GM12878 (cell line): ENCODE measurements at regions of chr13 and their contacts with region 1.

Region 1: GRCh38 chr13:89361909-89362308 is 1690.7 kb downstream of the SLITRK5 start:
- DNase-seq: no peak
- ATAC-seq: no peak
- H3K4me3 ChIP-seq: no peak overlapping the region
- H3K27ac ChIP-seq: no peak overlapping the region
- H3K4me1 ChIP-seq: no peaks in the 10 kb centered on the region
- H3K27me3 ChIP-seq: no peaks in the 10 kb centered on the region
- CTCF ChIP-seq: no peak; a peak in 1 of 6 replicates
- EP300 ChIP-seq: no peak
- POLR2A ChIP-seq: no peak
- RAD21 ChIP-seq: no peak

Region 2: DNA sequence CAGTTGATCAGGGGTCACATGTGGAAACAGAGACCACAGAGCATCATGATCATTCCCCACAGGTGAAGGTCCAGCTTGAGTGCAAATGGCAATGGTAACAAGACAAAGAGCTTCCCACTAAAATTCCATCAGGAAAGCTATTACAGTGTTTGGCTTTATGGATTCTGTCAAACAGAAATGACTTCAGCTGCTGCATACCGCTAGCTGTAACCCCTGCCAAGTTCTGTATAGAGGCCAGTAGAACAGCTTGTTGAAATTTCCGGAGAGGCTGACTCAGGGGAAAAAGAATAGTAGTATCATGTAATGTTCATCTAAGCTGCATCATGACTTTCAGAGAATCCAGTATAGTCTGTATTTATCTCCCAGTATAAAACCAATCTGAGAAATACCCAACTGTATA is 13.9 kb after region 1 on chr13:
- CTCF ChIA-PET with region 1: no interaction called
- POLR2A ChIA-PET with region 1: no interaction called
- RAD21 ChIA-PET with region 1: no interaction called
- SMC1A ChIA-PET with region 1: no interaction called
- in situ Hi-C with region 1: no loop called
- intact Hi-C with region 1: no loop called
- DNase-seq: no peak
- ATAC-seq: no peak
- H3K4me3 ChIP-seq: no peak overlapping the region
- H3K27ac ChIP-seq: no peak overlapping the region
- H3K4me1 ChIP-seq: no peaks in the 10 kb centered on the region
- H3K27me3 ChIP-seq: no peaks in the 10 kb centered on the region
- CTCF ChIP-seq: no peak
- EP300 ChIP-seq: no peak
- POLR2A ChIP-seq: no peak
- RAD21 ChIP-seq: no peak

Region 3: GRCh38 chr13:89393758-89394304 is 31.9 kb after region 1 on chr13:
- CTCF ChIA-PET with region 1: no interaction called
- POLR2A ChIA-PET with region 1: no interaction called
- RAD21 ChIA-PET with region 1: no interaction called
- SMC1A ChIA-PET with region 1: no interaction called
- in situ Hi-C with region 1: no loop called
- intact Hi-C with region 1: no loop called
- DNase-seq: no peak
- ATAC-seq: no peak
- H3K4me3 ChIP-seq: no peak overlapping the region
- H3K27ac ChIP-seq: no peak overlapping the region
- H3K4me1 ChIP-seq: no peaks in the 10 kb centered on the region
- H3K27me3 ChIP-seq: no peaks in the 10 kb centered on the region
- CTCF ChIP-seq: no peak
- EP300 ChIP-seq: no peak
- POLR2A ChIP-seq: no peak
- RAD21 ChIP-seq: no peak

Region 4: DNA sequence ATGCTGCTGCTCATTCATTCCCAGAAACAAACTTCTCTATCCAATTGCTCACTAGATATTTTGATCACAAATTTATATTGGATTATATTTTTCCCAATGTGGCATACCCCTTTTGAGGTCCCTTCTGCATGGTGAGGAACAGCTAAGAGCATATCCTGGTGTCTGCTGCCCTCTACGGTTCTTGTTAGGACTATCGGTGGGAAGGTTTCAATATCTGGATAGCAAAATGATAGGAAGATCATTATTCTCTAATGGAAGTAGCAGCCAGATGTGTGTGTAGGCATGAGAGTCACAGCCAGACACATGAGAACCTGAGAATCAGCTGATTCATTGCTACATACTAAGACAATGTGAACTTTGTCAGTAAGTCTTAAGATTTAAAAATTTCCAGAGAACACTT is 563.2 kb after region 1 on chr13:
- CTCF ChIA-PET with region 1: no interaction called
- POLR2A ChIA-PET with region 1: no interaction called
- RAD21 ChIA-PET with region 1: no interaction called
- SMC1A ChIA-PET with region 1: no interaction called
- in situ Hi-C with region 1: no loop called
- intact Hi-C with region 1: loop called (anchors 10 kb)
- DNase-seq: no peak
- ATAC-seq: peak; percentile 62
- H3K4me3 ChIP-seq: no peak overlapping the region
- H3K27ac ChIP-seq: no peak overlapping the region
- H3K4me1 ChIP-seq: no peaks in the 10 kb centered on the region
- H3K27me3 ChIP-seq: no peaks in the 10 kb centered on the region
- CTCF ChIP-seq: peak in 2 of 3 experiments; percentile 34 to 52; a peak in 3 of 6 replicates
- EP300 ChIP-seq: no peak
- POLR2A ChIP-seq: no peak
- RAD21 ChIP-seq: peak; percentile 44; the same call in 1 of the 2 replicates